Caco-2 (cell line): ENCODE measurements at regions of chr7 and their contacts with region 1.

Region 1: DNA sequence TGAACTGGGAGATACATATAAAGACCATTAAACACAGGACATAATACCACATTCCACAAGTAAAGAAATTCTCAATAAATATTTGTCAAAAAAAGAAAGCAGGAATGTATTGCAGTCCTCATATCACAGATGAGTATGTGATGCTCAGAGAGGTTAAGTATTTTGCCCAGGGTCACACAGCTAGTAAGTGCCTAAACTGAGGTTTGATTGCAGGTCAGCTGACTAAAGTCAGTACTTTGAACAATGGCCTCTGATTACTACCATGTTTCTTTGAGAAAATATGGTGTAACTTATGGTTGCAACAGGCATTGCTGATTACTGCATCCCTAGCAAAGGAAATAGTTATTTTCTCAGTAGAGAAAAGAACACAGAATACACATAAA is 267.1 kb downstream of the ELMO1 start:
- DNase-seq: no peak
- H3K4me3 ChIP-seq: no peak overlapping the region
- H3K4me3 Mint-ChIP-seq: no peak overlapping the region
- H3K27ac Mint-ChIP-seq: no peak overlapping the region
- H3K4me1 ChIP-seq: peaks cover 14% of the 10 kb centered on the region
- H3K4me1 Mint-ChIP-seq: no peaks in the 10 kb centered on the region
- H3K27me3 ChIP-seq: no peaks in the 10 kb centered on the region
- H3K27me3 Mint-ChIP-seq: no peaks in the 10 kb centered on the region
- CTCF ChIP-seq: no peak

Region 2: GRCh38 chr7:36473454-36474282 is 707.9 kb before region 1 on chr7:
- CTCF ChIA-PET with region 1: interaction called, 6 read pairs
- POLR2A ChIA-PET with region 1: no interaction called
- intact Hi-C with region 1: loop called (anchors 5 kb)
- DNase-seq: peak in 1 of 2 experiments; percentile 57
- H3K4me3 ChIP-seq: no peak overlapping the region
- H3K4me3 Mint-ChIP-seq: no peak overlapping the region
- H3K27ac Mint-ChIP-seq: no peak overlapping the region
- H3K4me1 ChIP-seq: no peaks in the 10 kb centered on the region
- H3K4me1 Mint-ChIP-seq: no peaks in the 10 kb centered on the region
- H3K27me3 ChIP-seq: no peaks in the 10 kb centered on the region
- H3K27me3 Mint-ChIP-seq: no peaks in the 10 kb centered on the region
- CTCF ChIP-seq: peak; percentile 46 to 52

Region 3: DNA sequence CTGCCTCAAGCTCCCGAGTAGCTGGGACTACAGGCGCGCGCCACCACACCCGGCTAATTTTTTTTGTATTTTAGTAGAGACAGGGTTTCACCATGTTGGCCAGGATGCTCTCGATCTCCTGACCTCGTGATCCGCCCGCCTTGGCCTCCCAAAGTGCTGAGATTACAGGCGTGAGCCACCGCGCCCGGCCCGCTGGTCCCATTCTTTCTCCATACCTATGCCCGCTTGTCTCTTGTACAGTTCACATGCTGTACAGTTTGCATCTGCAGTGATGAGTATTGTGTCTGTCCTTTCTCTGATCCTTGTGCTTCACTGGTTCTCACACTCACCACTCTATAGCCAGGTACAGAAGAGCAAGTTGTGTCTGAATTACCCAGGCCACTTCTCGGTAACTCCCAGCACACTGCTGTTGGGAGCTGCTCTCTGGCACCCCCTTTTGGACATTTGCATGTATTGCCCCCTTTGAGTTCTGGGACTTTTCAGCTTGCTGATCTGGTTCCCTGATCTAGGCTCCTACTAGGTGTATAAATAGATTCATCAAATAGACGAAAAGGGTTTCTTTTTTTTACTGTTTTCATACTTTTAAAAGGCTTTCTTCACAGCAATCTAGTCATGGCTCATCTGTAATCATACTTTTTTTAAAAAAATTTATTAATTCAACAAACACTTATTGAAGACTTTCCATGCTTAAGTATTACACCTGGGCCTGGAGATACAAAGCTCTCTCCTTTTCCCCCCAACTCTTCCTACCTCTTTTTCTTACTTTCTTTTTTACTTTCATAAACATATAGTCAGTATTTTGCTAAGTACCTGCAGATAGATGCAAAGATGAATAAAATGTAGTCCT is 510.7 kb before region 1 on chr7:
- CTCF ChIA-PET with region 1: interaction called, 8 read pairs
- POLR2A ChIA-PET with region 1: no interaction called
- intact Hi-C with region 1: loop called (anchors 5 kb)
- DNase-seq: peak; percentile 57 to 74
- H3K4me3 ChIP-seq: no peak overlapping the region
- H3K4me3 Mint-ChIP-seq: no peak overlapping the region
- H3K27ac Mint-ChIP-seq: no peak overlapping the region
- H3K4me1 ChIP-seq: no peaks in the 10 kb centered on the region
- H3K4me1 Mint-ChIP-seq: no peaks in the 10 kb centered on the region
- H3K27me3 ChIP-seq: no peaks in the 10 kb centered on the region
- H3K27me3 Mint-ChIP-seq: no peaks in the 10 kb centered on the region
- CTCF ChIP-seq: peak; percentile 78 to 85

Region 4: DNA sequence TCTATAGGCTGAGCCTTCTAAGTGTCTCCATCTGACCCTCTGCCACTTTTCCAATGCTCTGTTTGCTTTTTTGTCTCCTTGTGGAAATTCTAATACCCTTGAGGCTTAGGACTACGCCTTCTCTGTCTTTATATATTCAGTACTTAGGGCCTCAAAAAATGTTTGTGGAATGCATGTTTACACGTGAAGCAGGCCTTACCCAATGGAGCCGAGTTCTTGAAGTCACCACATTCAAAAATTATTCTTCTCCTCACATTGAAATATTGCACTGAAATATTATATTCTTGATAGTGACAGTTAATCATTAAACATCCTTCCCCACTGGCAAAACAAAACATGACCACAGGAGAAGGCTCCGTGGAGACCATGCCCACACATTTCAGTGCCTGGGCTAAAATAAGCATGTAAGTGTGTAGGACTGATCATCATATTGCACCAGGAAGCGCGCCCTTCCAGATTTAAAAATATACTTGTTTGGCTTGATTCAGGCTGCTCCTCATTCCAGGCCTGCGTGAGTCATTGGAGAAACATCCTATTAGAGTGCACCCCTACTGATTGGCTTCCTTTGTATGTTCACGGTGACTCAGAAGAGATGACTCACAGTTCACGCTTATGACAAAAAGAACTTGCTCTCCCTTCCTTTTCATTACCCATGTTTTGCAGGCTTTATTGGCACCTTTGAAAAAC is 149.8 kb before region 1 on chr7:
- CTCF ChIA-PET with region 1: interaction called, 22 read pairs
- POLR2A ChIA-PET with region 1: no interaction called
- intact Hi-C with region 1: loop called (anchors 2 kb)
- DNase-seq: peak; percentile 83 to 86
- H3K4me3 ChIP-seq: no peak overlapping the region
- H3K4me3 Mint-ChIP-seq: peak overlapping the region; percentile 27
- H3K27ac Mint-ChIP-seq: peak overlapping the region; percentile 87
- H3K4me1 ChIP-seq: peaks cover 23% of the 10 kb centered on the region
- H3K4me1 Mint-ChIP-seq: peaks cover 24% of the 10 kb centered on the region
- H3K27me3 ChIP-seq: no peaks in the 10 kb centered on the region
- H3K27me3 Mint-ChIP-seq: no peaks in the 10 kb centered on the region
- CTCF ChIP-seq: no peak

Region 5: DNA sequence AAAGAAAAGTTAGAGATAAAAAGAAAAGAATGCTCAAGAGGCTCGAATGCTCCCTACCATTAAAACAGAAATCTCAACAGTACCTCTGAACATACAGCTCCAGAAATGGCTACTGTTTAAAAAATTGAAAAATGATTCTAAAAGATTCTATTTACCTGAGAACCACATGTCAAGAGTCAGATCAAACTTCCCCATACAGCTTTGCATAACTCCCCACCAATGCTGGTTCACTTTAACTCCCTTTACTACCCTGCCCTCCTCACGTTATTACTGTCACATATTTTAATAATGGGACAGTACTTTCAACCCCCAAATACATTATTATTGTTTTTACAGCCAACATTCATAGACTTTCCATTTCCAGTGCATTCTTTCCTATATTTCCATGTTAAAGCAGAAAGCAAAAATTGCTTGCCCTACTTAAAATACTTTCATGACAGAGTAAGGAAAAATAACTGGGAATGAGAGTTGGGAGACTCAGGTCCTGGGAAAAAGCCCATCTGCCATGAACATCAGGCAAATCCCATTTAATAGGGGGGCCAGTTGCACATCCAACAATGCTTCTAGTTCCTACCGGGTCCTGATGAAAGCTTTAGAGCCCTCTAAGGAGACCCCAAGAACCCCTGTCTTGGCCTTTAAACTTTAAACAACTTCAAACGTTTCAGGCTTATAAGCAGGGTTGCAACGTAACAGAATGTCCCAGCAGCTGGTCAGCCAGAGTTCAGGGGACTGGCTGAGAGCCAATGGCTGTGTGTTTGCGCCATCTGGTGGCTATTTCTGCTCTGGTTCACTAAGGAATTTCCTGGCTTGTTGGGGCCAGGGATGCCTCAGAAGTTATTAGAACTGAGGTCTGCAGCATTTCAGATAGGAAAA is 19.7 kb after region 1 on chr7:
- CTCF ChIA-PET with region 1: interaction called, 25 read pairs
- POLR2A ChIA-PET with region 1: no interaction called
- intact Hi-C with region 1: loop called (anchors 1 kb)
- DNase-seq: peak; percentile 80 to 84
- H3K4me3 ChIP-seq: no peak overlapping the region
- H3K4me3 Mint-ChIP-seq: no peak overlapping the region
- H3K27ac Mint-ChIP-seq: no peak overlapping the region
- H3K4me1 ChIP-seq: no peaks in the 10 kb centered on the region; the same call in 1 of the 2 replicates
- H3K4me1 Mint-ChIP-seq: no peaks in the 10 kb centered on the region
- H3K27me3 ChIP-seq: no peaks in the 10 kb centered on the region
- H3K27me3 Mint-ChIP-seq: no peaks in the 10 kb centered on the region
- CTCF ChIP-seq: peak; percentile 79 to 85